Activated B cell treated with CpG ODN at 0.5 μM for 24 hours (primary cell): ENCODE measurements at regions of chr22 and their contacts with region 1.

Region 1: GRCh38 chr22:21938071-21938822 is 14.4 kb downstream of the PPM1F start:
- DNase-seq: peak; percentile 93
- ATAC-seq: peak; percentile 95
- H3K4me3 Mint-ChIP-seq: peak overlapping the region; percentile 89
- H3K27ac Mint-ChIP-seq: peak overlapping the region; percentile 85
- H3K4me1 Mint-ChIP-seq: peaks cover 62% of the 10 kb centered on the region
- H3K27me3 Mint-ChIP-seq: no peaks in the 10 kb centered on the region
- CTCF ChIP-seq: peak; percentile 80

Region 2: GRCh38 chr22:21712894-21713712 is 225.1 kb before region 1 on chr22:
- CTCF ChIA-PET with region 1: interaction called, 6 read pairs
- POLR2A ChIA-PET with region 1: no interaction called
- intact Hi-C with region 1: loop called (anchors 1 kb)
- DNase-seq: no peak
- ATAC-seq: peak; percentile 95
- H3K4me3 Mint-ChIP-seq: peak overlapping the region; percentile 28
- H3K27ac Mint-ChIP-seq: peak overlapping the region; percentile 27
- H3K4me1 Mint-ChIP-seq: peaks cover 7% of the 10 kb centered on the region
- H3K27me3 Mint-ChIP-seq: no peaks in the 10 kb centered on the region
- CTCF ChIP-seq: peak; percentile 25

Region 3: GRCh38 chr22:21735200-21736076 is 202.8 kb before region 1 on chr22 and contains the start of gene YPEL1:
- CTCF ChIA-PET with region 1: interaction called, 3 read pairs
- POLR2A ChIA-PET with region 1: interaction called, 3 read pairs
- intact Hi-C with region 1: loop called (anchors 1 kb)
- DNase-seq: peak; percentile 97
- ATAC-seq: peak; percentile 87
- H3K4me3 Mint-ChIP-seq: peak within 1 kb of the TSS; percentile 93
- H3K27ac Mint-ChIP-seq: peak within 1 kb of the TSS; percentile 96
- H3K4me1 Mint-ChIP-seq: peaks cover 42% of the 10 kb centered on the region
- H3K27me3 Mint-ChIP-seq: no peaks in the 10 kb centered on the region
- CTCF ChIP-seq: no peak
- total RNA-seq, gene YPEL1: 3.0 and 4.1 TPM in 2 replicates

Region 4: DNA sequence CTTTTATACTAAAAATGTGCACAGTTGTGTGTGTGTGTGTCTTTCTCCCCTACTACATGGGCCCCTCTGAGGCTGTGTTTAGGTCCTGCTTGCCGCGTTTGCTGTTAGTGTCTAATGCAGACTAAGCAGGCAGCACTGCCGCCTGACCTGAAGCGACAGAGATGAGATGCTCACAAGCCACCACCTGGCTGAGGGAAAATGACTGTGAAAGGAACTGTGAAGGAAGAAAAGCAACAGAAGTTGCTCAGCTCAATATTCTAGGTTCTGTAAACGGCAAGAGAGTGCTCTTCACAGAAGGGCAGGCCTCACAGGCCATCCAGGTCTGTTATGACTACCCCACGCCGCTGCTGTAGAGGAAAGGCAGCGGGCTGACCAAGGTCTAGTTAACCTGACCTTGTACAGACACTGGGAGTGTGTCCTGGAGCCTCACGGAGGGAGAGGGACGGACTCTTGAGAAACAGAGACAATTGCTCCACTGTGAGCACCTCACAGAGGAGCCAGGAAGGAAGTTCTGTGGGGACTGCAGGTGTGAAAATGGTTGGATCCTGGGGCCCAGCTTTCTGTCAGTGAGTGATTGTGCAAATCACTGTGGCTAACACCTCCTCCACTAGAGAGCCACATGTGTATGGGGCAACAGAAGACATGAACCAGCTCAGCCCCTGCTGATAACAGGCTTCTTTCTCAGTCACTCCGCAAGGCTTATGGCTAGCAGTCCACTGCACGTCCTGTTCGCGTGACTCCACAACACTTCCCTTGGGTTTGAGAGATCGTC is 171.4 kb before region 1 on chr22:
- CTCF ChIA-PET with region 1: interaction called, 3 read pairs
- POLR2A ChIA-PET with region 1: no interaction called
- intact Hi-C with region 1: loop called (anchors 5 kb)
- DNase-seq: no peak
- ATAC-seq: no peak
- H3K4me3 Mint-ChIP-seq: no peak overlapping the region
- H3K27ac Mint-ChIP-seq: peak overlapping the region; percentile 8
- H3K4me1 Mint-ChIP-seq: no peaks in the 10 kb centered on the region
- H3K27me3 Mint-ChIP-seq: no peaks in the 10 kb centered on the region
- CTCF ChIP-seq: no peak

Region 5: GRCh38 chr22:21816787-21817496 is 121.3 kb before region 1 on chr22:
- CTCF ChIA-PET with region 1: no interaction called
- POLR2A ChIA-PET with region 1: no interaction called
- intact Hi-C with region 1: loop called (anchors 1 kb)
- DNase-seq: peak; percentile 34
- ATAC-seq: peak; percentile 89
- H3K4me3 Mint-ChIP-seq: peak overlapping the region; percentile 81
- H3K27ac Mint-ChIP-seq: peak overlapping the region; percentile 96
- H3K4me1 Mint-ChIP-seq: peaks cover 80% of the 10 kb centered on the region
- H3K27me3 Mint-ChIP-seq: no peaks in the 10 kb centered on the region
- CTCF ChIP-seq: no peak

Region 6: GRCh38 chr22:21952586-21953571 is 14.6 kb after region 1 on chr22 and contains the start of gene PPM1F:
- CTCF ChIA-PET with region 1: interaction called, 66 read pairs
- POLR2A ChIA-PET with region 1: interaction called, 9 read pairs
- intact Hi-C with region 1: loop called (anchors 2 kb)
- DNase-seq: peak; percentile 98
- ATAC-seq: peak; percentile 86
- H3K4me3 Mint-ChIP-seq: peak within 1 kb of the TSS; percentile 93
- H3K27ac Mint-ChIP-seq: peak within 1 kb of the TSS; percentile 76
- H3K4me1 Mint-ChIP-seq: peaks cover 15% of the 10 kb centered on the region
- H3K27me3 Mint-ChIP-seq: no peaks in the 10 kb centered on the region
- CTCF ChIP-seq: no peak
- total RNA-seq, gene PPM1F: 18.2 and 21.1 TPM in 2 replicates

Region 7: GRCh38 chr22:21982338-21982965 is 44.2 kb after region 1 on chr22 and contains the start of gene TOP3B:
- CTCF ChIA-PET with region 1: interaction called, 3 read pairs
- POLR2A ChIA-PET with region 1: no interaction called
- intact Hi-C with region 1: loop called (anchors 5 kb)
- DNase-seq: peak; percentile 79
- ATAC-seq: peak; percentile 94
- H3K4me3 Mint-ChIP-seq: peak within 1 kb of the TSS; percentile 88
- H3K27ac Mint-ChIP-seq: peak within 1 kb of the TSS; percentile 87
- H3K4me1 Mint-ChIP-seq: peaks cover 37% of the 10 kb centered on the region
- H3K27me3 Mint-ChIP-seq: no peaks in the 10 kb centered on the region
- CTCF ChIP-seq: no peak
- total RNA-seq, gene TOP3B: 60.4 and 83.4 TPM in 2 replicates

Region 8: DNA sequence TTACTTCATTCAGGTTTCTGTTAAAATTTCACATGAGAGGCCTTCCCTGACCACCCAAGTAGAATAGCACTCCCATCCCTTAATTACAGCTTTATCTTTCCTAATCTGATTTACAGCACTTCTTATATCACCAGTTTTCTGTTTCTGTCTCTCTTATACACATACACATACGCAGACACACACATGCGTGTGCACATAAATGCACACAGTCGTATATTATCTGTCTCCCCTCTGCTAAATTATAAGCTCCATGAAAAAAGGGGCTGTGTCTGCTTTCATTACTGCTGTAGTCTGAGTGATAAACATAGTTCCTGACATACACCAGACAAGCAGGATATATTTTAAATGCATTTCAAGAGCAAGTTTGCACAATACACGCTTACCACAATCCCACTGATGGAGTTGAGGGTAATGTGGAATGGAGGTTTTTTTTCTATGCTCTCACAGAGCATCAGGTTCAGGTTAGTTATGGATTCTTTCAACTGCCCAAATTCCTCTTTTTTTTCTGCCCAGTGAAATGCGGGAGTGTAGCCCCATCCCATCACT is 58.0 kb after region 1 on chr22:
- CTCF ChIA-PET with region 1: no interaction called
- POLR2A ChIA-PET with region 1: no interaction called
- intact Hi-C with region 1: no loop called
- DNase-seq: no peak
- ATAC-seq: no peak
- H3K4me3 Mint-ChIP-seq: no peak overlapping the region
- H3K27ac Mint-ChIP-seq: no peak overlapping the region
- H3K4me1 Mint-ChIP-seq: no peaks in the 10 kb centered on the region
- H3K27me3 Mint-ChIP-seq: no peaks in the 10 kb centered on the region
- CTCF ChIP-seq: no peak